Calu3 (cell line): ENCODE measurements at regions of chrX and their contacts with region 1.

Region 1: GRCh38 chrX:80876877-80877276 is 67.2 kb upstream of the BRWD3 start:
- DNase-seq: no peak
- H3K4me3 Mint-ChIP-seq: no peak overlapping the region
- H3K27ac Mint-ChIP-seq: no peak overlapping the region
- H3K4me1 Mint-ChIP-seq: no peaks in the 10 kb centered on the region
- H3K27me3 Mint-ChIP-seq: no peaks in the 10 kb centered on the region
- CTCF ChIP-seq: no peak

Region 2: GRCh38 chrX:80511969-80512760 is 364.7 kb before region 1 on chrX:
- CTCF ChIA-PET with region 1: no interaction called
- intact Hi-C with region 1: no loop called
- DNase-seq: peak; percentile 18
- H3K4me3 Mint-ChIP-seq: no peak overlapping the region
- H3K27ac Mint-ChIP-seq: peak overlapping the region; percentile 43
- H3K4me1 Mint-ChIP-seq: peaks cover 17% of the 10 kb centered on the region
- H3K27me3 Mint-ChIP-seq: no peaks in the 10 kb centered on the region
- CTCF ChIP-seq: no peak

Region 3: DNA sequence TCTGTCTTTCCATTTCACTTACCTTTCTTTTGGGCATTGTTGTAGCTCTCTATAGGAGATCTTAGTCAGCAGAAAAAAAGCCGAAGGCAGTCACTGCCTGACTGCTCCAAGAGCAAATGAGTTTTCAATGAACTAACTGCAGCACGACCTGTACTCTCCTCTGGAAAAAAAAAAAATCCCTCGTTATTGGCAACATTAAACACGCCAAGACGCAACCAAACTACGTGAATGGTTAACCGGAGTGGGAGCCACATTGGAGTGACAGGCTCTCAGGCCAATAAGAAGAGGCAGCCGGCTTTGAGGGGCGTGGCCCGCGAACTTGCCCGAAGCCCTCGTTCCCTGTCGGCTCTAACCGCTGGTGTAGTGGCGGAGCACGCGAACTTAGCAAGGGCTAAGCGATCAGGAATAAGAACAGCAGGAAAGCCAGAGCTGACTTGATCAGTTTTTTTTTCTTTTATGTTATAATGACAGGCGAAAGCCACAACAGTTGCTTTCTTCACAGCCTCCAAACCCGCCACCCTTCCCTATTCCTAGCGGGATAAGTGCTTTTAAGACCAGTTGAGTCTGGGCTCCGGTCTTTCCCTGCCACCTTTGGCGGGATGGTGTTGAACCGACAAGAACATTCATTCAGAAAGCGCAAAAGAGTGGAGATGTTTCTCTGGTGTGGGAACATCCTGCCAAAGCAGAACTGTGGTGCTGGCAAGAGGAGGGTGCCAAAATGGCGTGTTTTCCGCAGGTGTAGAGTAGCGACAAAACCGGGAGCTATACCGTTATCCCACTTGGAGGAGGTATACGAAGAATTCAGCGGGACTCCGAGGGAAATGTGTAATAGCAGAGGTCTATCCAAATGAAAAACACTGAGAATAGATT is 244.9 kb after region 1 on chrX:
- CTCF ChIA-PET with region 1: no interaction called
- intact Hi-C with region 1: loop called (anchors 2 kb)
- DNase-seq: peak; percentile 91
- H3K4me3 Mint-ChIP-seq: peak overlapping the region; percentile 90
- H3K27ac Mint-ChIP-seq: peak overlapping the region; percentile 82
- H3K4me1 Mint-ChIP-seq: peaks cover 9% of the 10 kb centered on the region
- H3K27me3 Mint-ChIP-seq: no peaks in the 10 kb centered on the region
- CTCF ChIP-seq: no peak

Region 4: DNA sequence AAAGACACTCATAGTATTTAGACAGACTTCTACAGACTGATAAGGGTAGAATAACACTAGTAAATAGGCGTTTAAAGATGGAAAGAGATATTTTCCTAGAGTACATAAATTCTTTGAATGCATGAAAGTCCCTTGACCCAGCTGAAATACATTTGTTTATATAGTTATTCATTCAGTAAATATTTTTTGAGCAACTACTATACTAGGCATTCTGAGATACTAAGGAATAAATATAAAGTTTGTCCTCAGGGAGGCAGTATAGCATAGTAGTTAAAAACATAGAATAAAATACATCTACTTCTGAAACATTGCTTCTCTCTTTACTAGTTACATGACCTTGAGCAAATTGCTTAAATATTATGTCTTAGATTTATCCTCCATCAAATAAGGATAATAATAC is 297.4 kb after region 1 on chrX:
- CTCF ChIA-PET with region 1: no interaction called
- intact Hi-C with region 1: loop called (anchors 10 kb)
- DNase-seq: no peak
- H3K4me3 Mint-ChIP-seq: no peak overlapping the region
- H3K27ac Mint-ChIP-seq: no peak overlapping the region
- H3K4me1 Mint-ChIP-seq: no peaks in the 10 kb centered on the region
- H3K27me3 Mint-ChIP-seq: no peaks in the 10 kb centered on the region
- CTCF ChIP-seq: no peak

Region 5: DNA sequence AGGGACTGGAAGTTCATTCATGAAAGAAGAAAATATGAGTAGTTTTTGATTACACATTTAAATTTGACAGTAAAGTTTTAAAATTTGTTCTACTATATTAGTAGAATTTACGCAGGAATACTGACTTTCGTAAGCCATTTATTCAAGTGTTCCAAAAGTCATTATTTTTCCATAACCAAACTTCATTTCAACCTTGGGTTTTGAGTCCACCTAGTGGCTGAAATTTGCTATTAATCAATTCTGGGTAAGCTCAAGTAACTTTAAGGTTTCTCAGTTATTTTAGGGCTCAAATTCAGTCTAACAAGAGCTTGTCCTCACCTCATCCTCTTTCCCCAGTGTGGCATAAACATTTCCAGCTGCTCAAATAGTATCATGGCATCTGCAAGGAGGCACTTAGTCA is 500.5 kb after region 1 on chrX:
- CTCF ChIA-PET with region 1: interaction called, 5 read pairs
- intact Hi-C with region 1: loop called (anchors 5 kb)
- DNase-seq: peak; percentile 3
- H3K4me3 Mint-ChIP-seq: no peak overlapping the region
- H3K27ac Mint-ChIP-seq: no peak overlapping the region
- H3K4me1 Mint-ChIP-seq: peaks cover 8% of the 10 kb centered on the region
- H3K27me3 Mint-ChIP-seq: no peaks in the 10 kb centered on the region
- CTCF ChIP-seq: no peak

Region 6: DNA sequence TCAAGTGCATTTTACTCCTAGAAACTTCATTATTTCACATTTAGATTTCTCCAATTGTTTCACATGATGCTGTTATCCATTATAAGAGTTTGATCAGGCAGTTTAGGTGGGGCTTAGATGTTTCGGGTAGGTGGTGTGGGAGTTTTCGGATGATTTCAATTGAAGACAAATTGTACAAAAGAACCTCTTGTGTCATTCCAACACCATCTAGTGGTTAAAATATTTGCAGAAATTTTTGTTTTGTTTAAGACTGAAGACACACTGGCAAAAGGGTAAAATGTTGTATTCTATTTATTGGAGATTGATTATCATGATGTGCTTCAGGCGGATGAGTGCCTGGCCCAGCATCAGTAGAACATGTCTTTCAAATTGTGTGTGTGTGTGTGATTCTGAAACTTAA is 537.8 kb after region 1 on chrX:
- CTCF ChIA-PET with region 1: no interaction called
- intact Hi-C with region 1: loop called (anchors 2 kb)
- DNase-seq: no peak
- H3K4me3 Mint-ChIP-seq: no peak overlapping the region
- H3K27ac Mint-ChIP-seq: no peak overlapping the region
- H3K4me1 Mint-ChIP-seq: no peaks in the 10 kb centered on the region
- H3K27me3 Mint-ChIP-seq: no peaks in the 10 kb centered on the region
- CTCF ChIP-seq: no peak

Region 7: GRCh38 chrX:82218361-82218760 is 1341.5 kb after region 1 on chrX:
- CTCF ChIA-PET with region 1: no interaction called
- intact Hi-C with region 1: loop called (anchors 10 kb)
- DNase-seq: no peak
- H3K4me3 Mint-ChIP-seq: no peak overlapping the region
- H3K27ac Mint-ChIP-seq: no peak overlapping the region
- H3K4me1 Mint-ChIP-seq: no peaks in the 10 kb centered on the region
- H3K27me3 Mint-ChIP-seq: no peaks in the 10 kb centered on the region
- CTCF ChIP-seq: peak; percentile 28